Activated CD4-positive, alpha-beta T cell treated with anti-CD3 and anti-CD28 coated beads, Interleukin-2, amount 10 ng/mL, durations not matched to agents 24 days and 14 days (primary cell): ENCODE measurements at regions of chr11 and their contacts with region 1.

Region 1: DNA sequence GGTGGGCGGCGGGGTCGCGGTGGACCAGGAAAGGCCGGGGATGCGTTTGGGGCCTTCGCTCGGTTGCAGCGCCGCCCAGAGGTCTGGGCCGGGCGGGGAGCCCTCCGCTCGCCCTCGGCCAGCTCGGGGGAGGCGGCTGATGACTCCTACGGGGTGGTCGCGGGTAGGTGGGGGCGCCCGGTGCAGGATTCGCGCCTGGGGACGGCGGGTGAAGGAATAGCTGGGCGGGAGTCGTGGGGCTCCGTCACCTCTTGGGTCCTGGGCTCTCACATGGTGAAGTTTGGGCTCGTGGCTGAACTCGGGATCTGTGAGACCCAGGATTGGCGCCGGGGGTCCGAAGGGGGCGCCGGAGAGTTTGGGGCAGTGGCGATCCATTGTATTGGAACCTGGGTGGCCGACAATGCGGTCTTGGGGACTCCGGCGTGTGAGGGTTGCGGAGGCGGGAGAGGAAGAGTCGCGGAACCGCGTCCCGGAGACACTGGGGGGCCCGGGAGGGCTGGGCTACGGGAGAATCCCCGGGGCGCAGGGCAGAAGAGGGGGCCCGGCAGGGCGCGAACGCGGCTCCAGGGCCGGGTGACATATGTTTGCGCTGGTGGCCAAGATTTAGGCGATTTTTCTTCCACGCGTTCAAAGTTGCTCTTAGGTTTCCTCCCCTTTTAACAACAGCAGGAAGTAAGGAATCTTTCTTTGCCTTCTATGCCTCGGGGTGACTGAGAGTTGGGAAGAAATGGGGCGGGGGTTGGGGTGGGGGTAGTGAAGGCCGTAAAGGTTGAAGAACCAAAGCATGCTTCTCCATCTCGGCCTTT is 935 bp downstream of the QSER1 start:
- DNase-seq: peak; percentile 82
- H3K4me3 Mint-ChIP-seq: peak overlapping the region; percentile 98
- H3K27ac Mint-ChIP-seq: peak overlapping the region; percentile 98
- H3K4me1 Mint-ChIP-seq: peaks cover 27% of the 10 kb centered on the region
- H3K27me3 Mint-ChIP-seq: peaks cover 10% of the 10 kb centered on the region

Region 2: DNA sequence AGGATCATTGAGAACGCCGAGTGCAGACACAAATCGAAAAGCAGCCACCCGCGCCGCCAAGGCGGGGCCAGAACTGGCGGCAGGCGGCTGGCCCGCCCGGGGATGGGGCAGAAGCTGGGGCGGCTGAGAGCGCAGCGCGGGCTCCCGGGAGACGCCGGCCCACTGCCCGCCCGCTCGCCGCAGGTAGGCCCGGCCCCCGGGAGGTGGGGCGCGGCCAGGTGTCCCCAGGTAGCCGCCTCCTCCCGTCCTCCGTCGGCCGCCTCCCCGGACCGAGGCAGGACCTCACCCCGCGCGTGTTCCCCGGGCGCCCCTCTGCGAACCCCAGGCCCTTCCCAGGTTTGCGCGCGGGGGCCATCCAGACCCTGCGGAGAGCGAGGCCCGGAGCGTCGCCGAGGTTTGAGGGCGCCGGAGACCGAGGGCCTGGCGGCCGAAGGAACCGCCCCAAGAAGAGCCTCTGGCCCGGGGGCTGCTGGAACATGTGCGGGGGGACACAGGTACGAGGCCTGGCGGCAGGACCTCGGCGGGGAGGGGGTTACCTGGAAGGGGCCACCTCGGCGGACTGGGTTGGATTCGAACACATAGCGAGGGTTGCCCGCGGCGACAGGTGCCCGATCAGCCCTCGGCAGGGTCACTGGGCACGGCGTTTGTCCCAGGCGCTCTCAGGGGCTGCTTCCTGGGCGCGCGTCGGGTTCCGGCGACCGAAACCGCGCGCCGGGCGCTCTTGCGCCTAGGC is 63.7 kb before region 1 on chr11 and contains the start of gene PRRG4:
- intact Hi-C with region 1: loop called (anchors 1 kb)
- DNase-seq: peak; percentile 87
- H3K4me3 Mint-ChIP-seq: peak within 1 kb of the TSS; percentile 92
- H3K27ac Mint-ChIP-seq: peak within 1 kb of the TSS; percentile 82
- H3K4me1 Mint-ChIP-seq: peaks cover 14% of the 10 kb centered on the region
- H3K27me3 Mint-ChIP-seq: peaks cover 31% of the 10 kb centered on the region
- total RNA-seq, gene PRRG4: 0.56 and 0.85 TPM in 2 replicates

Region 3: DNA sequence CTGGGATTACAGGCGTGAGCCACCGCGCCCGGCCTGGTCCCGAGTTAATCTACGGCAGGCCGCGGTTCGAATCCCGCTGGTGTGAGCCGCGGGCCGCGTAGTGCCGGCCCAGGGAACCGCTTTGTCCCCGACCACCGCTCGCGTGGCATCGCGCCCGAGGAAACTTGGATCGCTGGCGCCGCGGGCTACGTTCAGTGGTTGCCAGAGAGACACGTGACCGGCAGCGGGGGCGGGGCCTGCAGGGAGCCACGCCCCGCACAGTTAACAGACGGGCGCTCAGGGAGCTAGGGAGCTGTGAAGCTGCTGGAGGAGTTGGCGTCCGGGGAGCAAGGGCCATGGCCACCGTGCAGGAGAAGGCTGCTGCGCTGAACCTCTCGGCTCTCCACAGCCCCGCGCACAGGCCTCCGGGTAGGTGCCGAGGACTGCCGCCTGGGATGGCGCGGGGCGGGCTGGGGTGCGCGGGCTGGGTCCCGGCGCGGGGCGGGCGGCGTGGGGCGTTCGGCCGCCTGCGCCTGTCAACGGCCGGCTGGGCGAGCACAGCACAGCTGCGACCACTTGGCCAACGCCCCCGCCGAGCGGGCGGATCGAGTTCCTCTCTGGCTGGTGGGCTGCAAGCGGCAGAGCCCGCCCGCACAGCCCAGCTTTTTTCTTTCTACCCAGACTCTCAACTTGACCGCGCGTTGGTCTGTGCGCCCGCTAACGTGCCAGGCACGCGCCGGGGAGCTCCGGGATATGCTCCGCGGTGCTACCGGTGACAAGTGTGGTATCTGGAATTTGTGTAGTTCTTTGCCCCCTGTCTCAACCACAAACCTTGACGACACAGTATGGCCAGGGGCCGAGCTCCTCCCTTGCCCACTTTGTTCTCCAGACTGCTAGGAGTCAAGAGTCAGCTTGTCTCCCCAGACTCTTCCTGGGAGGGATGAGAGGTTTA is 122.3 kb after region 1 on chr11 and contains the start of gene DEPDC7:
- intact Hi-C with region 1: loop called (anchors 5 kb)
- DNase-seq: peak; percentile 93
- H3K4me3 Mint-ChIP-seq: peak within 1 kb of the TSS; percentile 84
- H3K27ac Mint-ChIP-seq: no peak within 1 kb of the TSS
- H3K4me1 Mint-ChIP-seq: peaks cover 16% of the 10 kb centered on the region
- H3K27me3 Mint-ChIP-seq: peaks cover 61% of the 10 kb centered on the region
- total RNA-seq, gene DEPDC7: 0.64 and 0.84 TPM in 2 replicates

Region 4: GRCh38 chr11:33065445-33066178 is 172.1 kb after region 1 on chr11:
- intact Hi-C with region 1: loop called (anchors 1 kb)
- DNase-seq: peak; percentile 91
- H3K4me3 Mint-ChIP-seq: no peak overlapping the region
- H3K27ac Mint-ChIP-seq: no peak overlapping the region
- H3K4me1 Mint-ChIP-seq: peaks cover 32% of the 10 kb centered on the region
- H3K27me3 Mint-ChIP-seq: no peaks in the 10 kb centered on the region

Region 5: GRCh38 chr11:33736148-33736809 is 842.7 kb after region 1 on chr11 and contains the start of gene CD59:
- intact Hi-C with region 1: loop called (anchors 10 kb)
- DNase-seq: peak; percentile 97
- H3K4me3 Mint-ChIP-seq: peak within 1 kb of the TSS; percentile 90
- H3K27ac Mint-ChIP-seq: peak within 1 kb of the TSS; percentile 89
- H3K4me1 Mint-ChIP-seq: peaks cover 36% of the 10 kb centered on the region
- H3K27me3 Mint-ChIP-seq: peaks cover 8% of the 10 kb centered on the region
- total RNA-seq, gene CD59: 94.1 and 98.7 TPM in 2 replicates